ENCODE measurements at regions of chr6 and their contacts with region 1.

Region 1: GRCh38 chr6:3456755-3457466 is at the start of gene SLC22A23:
- DNase-seq: peak; percentile 39
- H3K4me3 ChIP-seq: peak within 1 kb of the TSS; percentile 18 to 67 (median 46)
- H3K27ac ChIP-seq: no peak within 1 kb of the TSS
- H3K4me1 ChIP-seq: peaks cover 5% of the 10 kb centered on the region
- H3K27me3 ChIP-seq: peaks cover 7 to 20% of the 10 kb centered on the region in 2 experiments
- CTCF ChIP-seq: peak; percentile 35 to 60
- POLR2A ChIP-seq: no peak
- total RNA-seq, gene SLC22A23: 10.8 and 14.3 TPM in 2 replicates

Region 2: DNA sequence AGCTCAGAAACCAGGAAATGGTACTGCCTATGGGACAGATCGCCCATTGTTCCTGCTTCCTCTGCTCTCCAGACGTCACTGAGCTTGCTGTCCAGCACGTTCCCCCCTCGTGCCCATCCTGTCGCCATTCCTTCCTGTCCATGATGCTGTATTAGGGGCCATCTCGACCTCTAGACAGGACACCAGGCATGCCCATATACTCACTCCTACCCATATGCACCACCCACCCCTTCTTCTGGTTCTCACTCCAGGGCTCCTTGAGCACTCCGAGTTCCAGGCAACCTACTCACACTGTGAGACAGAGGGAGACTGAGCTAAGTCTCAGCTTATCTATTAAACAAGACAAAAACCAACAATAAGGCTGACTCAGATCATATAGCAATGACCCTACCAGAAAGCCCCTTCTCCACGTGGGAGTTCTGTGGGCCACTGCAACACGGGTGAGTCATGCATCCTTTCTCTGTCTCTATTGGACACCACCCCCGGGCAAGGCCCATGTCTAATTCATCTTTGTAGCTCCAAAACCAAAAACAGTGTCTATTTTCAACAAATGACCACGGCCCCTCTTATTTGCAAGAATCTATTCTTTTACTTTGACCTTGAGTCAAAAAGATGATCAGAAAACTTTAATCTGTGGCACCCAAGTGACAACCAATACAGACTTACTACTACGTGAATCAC is 132.5 kb before region 1 on chr6:
- CTCF ChIA-PET with region 1: interaction called, 3 read pairs
- POLR2A ChIA-PET with region 1: no interaction called
- dilution Hi-C with region 1: no loop called
- intact Hi-C with region 1: loop called (anchors 1 kb)
- DNase-seq: peak; percentile 93
- H3K4me3 ChIP-seq: no peak overlapping the region
- H3K27ac ChIP-seq: peak overlapping the region; percentile 89
- H3K4me1 ChIP-seq: peaks cover 23% of the 10 kb centered on the region
- H3K27me3 ChIP-seq: no peaks in the 10 kb centered on the region
- CTCF ChIP-seq: no peak
- POLR2A ChIP-seq: no peak

Region 3: GRCh38 chr6:3471711-3472110 is 14.8 kb after region 1 on chr6:
- CTCF ChIA-PET with region 1: interaction called, 11 read pairs
- POLR2A ChIA-PET with region 1: no interaction called
- dilution Hi-C with region 1: no loop called
- intact Hi-C with region 1: no loop called
- DNase-seq: no peak
- H3K4me3 ChIP-seq: no peak overlapping the region
- H3K27ac ChIP-seq: no peak overlapping the region
- H3K4me1 ChIP-seq: no peaks in the 10 kb centered on the region
- H3K27me3 ChIP-seq: no peaks in the 10 kb centered on the region
- CTCF ChIP-seq: no peak
- POLR2A ChIP-seq: no peak

Region 4: GRCh38 chr6:3561725-3562124 is 104.8 kb after region 1 on chr6:
- CTCF ChIA-PET with region 1: no interaction called
- POLR2A ChIA-PET with region 1: no interaction called
- dilution Hi-C with region 1: no loop called
- intact Hi-C with region 1: loop called (anchors 5 kb)
- DNase-seq: peak; percentile 98
- H3K4me3 ChIP-seq: no peak overlapping the region
- H3K27ac ChIP-seq: peak overlapping the region; percentile 59
- H3K4me1 ChIP-seq: peaks cover 18% of the 10 kb centered on the region
- H3K27me3 ChIP-seq: peaks cover 0 to 2% of the 10 kb centered on the region in 2 experiments
- CTCF ChIP-seq: peak; percentile 28 to 44
- POLR2A ChIP-seq: no peak

Region 5: GRCh38 chr6:3732345-3733141 is 275.6 kb after region 1 on chr6:
- CTCF ChIA-PET with region 1: interaction called, 5 read pairs
- POLR2A ChIA-PET with region 1: no interaction called
- dilution Hi-C with region 1: no loop called
- intact Hi-C with region 1: loop called (anchors 5 kb)
- DNase-seq: peak; percentile 88
- H3K4me3 ChIP-seq: no peak overlapping the region
- H3K27ac ChIP-seq: no peak overlapping the region
- H3K4me1 ChIP-seq: peaks cover 40% of the 10 kb centered on the region
- H3K27me3 ChIP-seq: no peaks in the 10 kb centered on the region
- CTCF ChIP-seq: peak; percentile 79 to 84
- POLR2A ChIP-seq: peak; percentile 22

Measured in endothelial cell of umbilical vein (primary cell).